Caco-2 (cell line): ENCODE measurements at regions of chr6 and their contacts with region 1.

Region 1: DNA sequence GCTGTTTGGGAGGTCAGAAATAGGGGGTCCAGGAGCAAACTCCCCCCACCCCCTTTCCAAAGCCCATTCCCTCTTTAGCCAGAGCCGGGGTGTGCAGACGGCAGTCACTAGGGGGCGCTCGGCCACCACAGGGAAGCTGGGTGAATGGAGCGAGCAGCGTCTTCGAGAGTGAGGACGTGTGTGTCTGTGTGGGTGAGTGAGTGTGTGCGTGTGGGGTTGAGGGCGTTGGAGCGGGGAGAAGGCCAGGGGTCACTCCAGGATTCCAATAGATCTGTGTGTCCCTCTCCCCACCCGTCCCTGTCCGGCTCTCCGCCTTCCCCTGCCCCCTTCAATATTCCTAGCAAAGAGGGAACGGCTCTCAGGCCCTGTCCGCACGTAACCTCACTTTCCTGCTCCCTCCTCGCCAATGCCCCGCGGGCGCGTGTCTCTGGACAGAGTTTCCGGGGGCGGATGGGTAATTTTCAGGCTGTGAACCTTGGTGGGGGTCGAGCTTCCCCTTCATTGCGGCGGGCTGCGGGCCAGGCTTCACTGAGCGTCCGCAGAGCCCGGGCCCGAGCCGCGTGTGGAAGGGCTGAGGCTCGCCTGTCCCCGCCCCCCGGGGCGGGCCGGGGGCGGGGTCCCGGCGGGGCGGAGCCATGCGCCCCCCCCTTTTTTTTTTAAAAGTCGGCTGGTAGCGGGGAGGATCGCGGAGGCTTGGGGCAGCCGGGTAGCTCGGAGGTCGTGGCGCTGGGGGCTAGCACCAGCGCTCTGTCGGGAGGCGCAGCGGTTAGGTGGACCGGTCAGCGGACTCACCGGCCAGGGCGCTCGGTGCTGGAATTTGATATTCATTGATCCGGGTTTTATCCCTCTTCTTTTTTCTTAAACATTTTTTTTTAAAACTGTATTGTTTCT is at the start of gene VEGFA:
- DNase-seq: peak; percentile 88 to 92
- H3K4me3 ChIP-seq: peak within 1 kb of the TSS; percentile 95
- H3K4me3 Mint-ChIP-seq: peak within 1 kb of the TSS; percentile 96
- H3K27ac Mint-ChIP-seq: peak within 1 kb of the TSS; percentile 92
- H3K4me1 ChIP-seq: peaks cover 37% of the 10 kb centered on the region
- H3K4me1 Mint-ChIP-seq: peaks cover 24% of the 10 kb centered on the region
- H3K27me3 ChIP-seq: no peaks in the 10 kb centered on the region
- H3K27me3 Mint-ChIP-seq: no peaks in the 10 kb centered on the region
- CTCF ChIP-seq: peak; percentile 92 to 97
- total RNA-seq, gene VEGFA: 172 and 174 TPM in 2 replicates

Region 2: GRCh38 chr6:43386492-43386891 is 383.3 kb before region 1 on chr6:
- CTCF ChIA-PET with region 1: no interaction called
- POLR2A ChIA-PET with region 1: no interaction called
- intact Hi-C with region 1: no loop called
- DNase-seq: no peak
- H3K4me3 ChIP-seq: no peak overlapping the region
- H3K4me3 Mint-ChIP-seq: no peak overlapping the region
- H3K27ac Mint-ChIP-seq: no peak overlapping the region
- H3K4me1 ChIP-seq: peaks cover 23% of the 10 kb centered on the region
- H3K4me1 Mint-ChIP-seq: peaks cover 18% of the 10 kb centered on the region
- H3K27me3 ChIP-seq: no peaks in the 10 kb centered on the region
- H3K27me3 Mint-ChIP-seq: no peaks in the 10 kb centered on the region
- CTCF ChIP-seq: peak; percentile 15 to 54

Region 3: DNA sequence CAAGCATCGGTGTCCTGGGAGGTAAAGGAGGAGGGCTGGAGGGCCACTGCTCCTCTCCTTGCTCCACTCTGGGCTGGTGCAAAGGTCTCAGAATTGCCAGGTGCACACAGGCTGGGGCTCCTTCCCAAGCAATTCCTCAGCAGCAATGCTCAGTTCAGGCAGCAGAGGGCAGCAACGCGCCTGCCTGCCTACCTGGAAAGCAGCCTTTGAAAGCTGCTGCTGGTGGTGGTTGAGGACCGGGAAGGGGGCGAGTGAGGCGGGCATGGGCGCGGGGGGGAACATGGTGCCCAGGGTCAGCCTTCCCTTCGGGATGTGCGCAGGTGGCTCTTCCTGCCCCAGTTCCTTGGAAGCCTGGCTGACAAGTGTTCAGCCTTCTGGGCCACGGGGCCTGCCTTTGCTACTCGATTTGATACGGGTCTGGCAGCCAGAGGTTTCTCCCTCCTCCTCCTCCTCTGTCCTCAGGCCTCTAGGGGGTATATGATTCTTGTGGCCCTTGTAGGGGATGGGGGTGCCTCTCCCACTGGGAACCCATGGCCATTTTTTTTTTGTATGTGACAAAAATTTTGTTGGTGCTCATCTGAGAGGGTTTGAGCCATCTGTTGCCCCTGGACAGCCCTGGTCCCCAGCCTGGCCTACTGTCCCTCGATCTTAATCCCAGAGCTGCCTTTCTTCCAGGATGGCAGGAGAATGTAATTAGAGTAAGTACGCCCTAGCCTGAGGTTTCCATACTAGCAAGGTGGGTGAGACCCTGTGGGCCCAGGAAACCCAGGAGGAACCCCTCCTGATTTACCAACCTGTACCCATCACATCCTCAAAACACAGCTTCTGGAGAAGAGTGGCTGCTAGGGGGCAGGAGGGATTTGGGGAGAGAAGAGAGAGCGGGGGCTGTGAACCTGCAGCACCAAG is 102.3 kb before region 1 on chr6:
- CTCF ChIA-PET with region 1: interaction called, 10 read pairs
- POLR2A ChIA-PET with region 1: no interaction called
- intact Hi-C with region 1: loop called (anchors 5 kb)
- DNase-seq: peak; percentile 84 to 91
- H3K4me3 ChIP-seq: 0 out of 2 replicates have a peak overlapping the region, but pooled peaks have one; percentile 4
- H3K4me3 Mint-ChIP-seq: peak overlapping the region; percentile 56
- H3K27ac Mint-ChIP-seq: peak overlapping the region; percentile 73
- H3K4me1 ChIP-seq: peaks cover 9% of the 10 kb centered on the region
- H3K4me1 Mint-ChIP-seq: no peaks in the 10 kb centered on the region
- H3K27me3 ChIP-seq: no peaks in the 10 kb centered on the region
- H3K27me3 Mint-ChIP-seq: no peaks in the 10 kb centered on the region
- CTCF ChIP-seq: peak; percentile 93 to 94

Region 4: GRCh38 chr6:43781941-43782704 is 12.4 kb after region 1 on chr6:
- CTCF ChIA-PET with region 1: interaction called, 6 read pairs
- POLR2A ChIA-PET with region 1: interaction called, 21 read pairs
- intact Hi-C with region 1: no loop called
- DNase-seq: no peak
- H3K4me3 ChIP-seq: no peak overlapping the region
- H3K4me3 Mint-ChIP-seq: no peak overlapping the region
- H3K27ac Mint-ChIP-seq: peak overlapping the region; percentile 1
- H3K4me1 ChIP-seq: no peaks in the 10 kb centered on the region
- H3K4me1 Mint-ChIP-seq: peaks cover 6% of the 10 kb centered on the region
- H3K27me3 ChIP-seq: no peaks in the 10 kb centered on the region
- H3K27me3 Mint-ChIP-seq: no peaks in the 10 kb centered on the region
- CTCF ChIP-seq: no peak

Region 5: GRCh38 chr6:43817192-43817591 is 47.4 kb after region 1 on chr6:
- CTCF ChIA-PET with region 1: interaction called, 9 read pairs
- POLR2A ChIA-PET with region 1: interaction called, 10 read pairs
- intact Hi-C with region 1: loop called (anchors 1 kb)
- DNase-seq: peak; percentile 66 to 69
- H3K4me3 ChIP-seq: no peak overlapping the region
- H3K4me3 Mint-ChIP-seq: no peak overlapping the region
- H3K27ac Mint-ChIP-seq: peak overlapping the region; percentile 56
- H3K4me1 ChIP-seq: peaks cover 57% of the 10 kb centered on the region
- H3K4me1 Mint-ChIP-seq: peaks cover 55% of the 10 kb centered on the region
- H3K27me3 ChIP-seq: no peaks in the 10 kb centered on the region
- H3K27me3 Mint-ChIP-seq: no peaks in the 10 kb centered on the region
- CTCF ChIP-seq: peak; percentile 19 to 80

Region 6: GRCh38 chr6:43900911-43901732 is 131.4 kb after region 1 on chr6:
- CTCF ChIA-PET with region 1: no interaction called
- POLR2A ChIA-PET with region 1: no interaction called
- intact Hi-C with region 1: no loop called
- DNase-seq: peak in 1 of 2 experiments; percentile 22
- H3K4me3 ChIP-seq: no peak overlapping the region
- H3K4me3 Mint-ChIP-seq: no peak overlapping the region
- H3K27ac Mint-ChIP-seq: peak overlapping the region; percentile 69
- H3K4me1 ChIP-seq: no peaks in the 10 kb centered on the region
- H3K4me1 Mint-ChIP-seq: peaks cover 16% of the 10 kb centered on the region
- H3K27me3 ChIP-seq: no peaks in the 10 kb centered on the region
- H3K27me3 Mint-ChIP-seq: no peaks in the 10 kb centered on the region
- CTCF ChIP-seq: no peak

Region 7: DNA sequence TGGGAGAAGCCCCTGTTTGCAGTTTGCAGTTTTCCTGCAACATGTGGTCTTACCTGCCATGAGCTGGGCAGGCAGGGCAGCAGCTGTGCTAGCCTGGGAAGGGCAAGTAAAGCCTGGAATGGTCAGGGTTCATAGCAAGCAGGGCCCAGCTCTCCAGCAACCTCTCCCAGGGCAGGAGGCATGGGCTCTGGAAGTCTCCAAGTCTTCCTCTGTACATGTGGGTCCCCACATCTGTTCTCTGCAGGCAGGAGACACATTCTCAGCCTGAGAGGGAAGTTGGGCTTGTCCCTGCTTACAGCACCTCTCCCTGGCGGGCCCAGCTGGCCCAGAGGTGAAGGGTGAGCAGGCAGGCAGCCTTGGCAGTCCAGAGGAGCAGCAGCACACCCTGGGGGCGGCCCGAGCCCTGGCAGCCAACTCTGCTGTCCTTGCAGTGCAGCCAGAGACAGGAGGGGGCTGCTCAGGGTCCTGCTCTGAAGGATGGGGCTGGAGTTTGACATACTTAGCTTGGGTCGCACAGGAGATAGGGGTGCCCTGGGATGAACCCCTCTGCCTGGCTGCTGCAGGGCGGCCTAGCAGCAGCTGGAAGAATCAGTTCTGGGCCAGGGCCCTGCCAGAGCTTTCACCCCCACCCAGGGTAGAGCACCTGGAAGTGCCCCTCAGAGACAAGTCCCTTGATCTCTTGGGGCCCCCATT is 181.4 kb after region 1 on chr6:
- CTCF ChIA-PET with region 1: interaction called, 7 read pairs
- POLR2A ChIA-PET with region 1: no interaction called
- intact Hi-C with region 1: loop called (anchors 1 kb)
- DNase-seq: peak; percentile 75 to 82
- H3K4me3 ChIP-seq: no peak overlapping the region
- H3K4me3 Mint-ChIP-seq: no peak overlapping the region
- H3K27ac Mint-ChIP-seq: no peak overlapping the region
- H3K4me1 ChIP-seq: 0 out of 2 replicates have a peak, but pooled peaks cover 3% of the 10 kb centered on the region
- H3K4me1 Mint-ChIP-seq: no peaks in the 10 kb centered on the region
- H3K27me3 ChIP-seq: no peaks in the 10 kb centered on the region
- H3K27me3 Mint-ChIP-seq: no peaks in the 10 kb centered on the region
- CTCF ChIP-seq: peak; percentile 59 to 89

Region 8: GRCh38 chr6:44074439-44075136 is 304.8 kb after region 1 on chr6:
- CTCF ChIA-PET with region 1: interaction called, 18 read pairs
- POLR2A ChIA-PET with region 1: interaction called, 9 read pairs
- intact Hi-C with region 1: loop called (anchors 1 kb)
- DNase-seq: peak; percentile 64 to 65
- H3K4me3 ChIP-seq: no peak overlapping the region
- H3K4me3 Mint-ChIP-seq: peak overlapping the region; percentile 86
- H3K27ac Mint-ChIP-seq: peak overlapping the region; percentile 12
- H3K4me1 ChIP-seq: peaks cover 9% of the 10 kb centered on the region
- H3K4me1 Mint-ChIP-seq: peaks cover 7% of the 10 kb centered on the region
- H3K27me3 ChIP-seq: no peaks in the 10 kb centered on the region
- H3K27me3 Mint-ChIP-seq: peaks cover 4% of the 10 kb centered on the region
- CTCF ChIP-seq: peak; percentile 88 to 91